ENCODE measurements at regions of chr12 and their contacts with region 1.

Region 1: GRCh38 chr12:107645630-107646333 is 39.8 kb upstream of the PWP1 start:
- DNase-seq: no peak
- H3K4me3 ChIP-seq: no peak overlapping the region
- H3K27ac ChIP-seq: no peak overlapping the region
- H3K4me1 ChIP-seq: no peaks in the 10 kb centered on the region
- H3K27me3 ChIP-seq: no peaks in the 10 kb centered on the region
- CTCF ChIP-seq: no peak

Region 2: GRCh38 chr12:107670999-107671643 is 25.3 kb after region 1 on chr12:
- CTCF ChIA-PET with region 1: interaction called, 10 read pairs
- POLR2A ChIA-PET with region 1: no interaction called
- intact Hi-C with region 1: no loop called
- DNase-seq: no peak
- H3K4me3 ChIP-seq: no peak overlapping the region
- H3K27ac ChIP-seq: no peak overlapping the region
- H3K4me1 ChIP-seq: no peaks in the 10 kb centered on the region; the same call in 1 of the 2 replicates
- H3K27me3 ChIP-seq: peaks cover 11% of the 10 kb centered on the region; the same call in 1 of the 2 replicates
- CTCF ChIP-seq: peak; percentile 69

Region 3: DNA sequence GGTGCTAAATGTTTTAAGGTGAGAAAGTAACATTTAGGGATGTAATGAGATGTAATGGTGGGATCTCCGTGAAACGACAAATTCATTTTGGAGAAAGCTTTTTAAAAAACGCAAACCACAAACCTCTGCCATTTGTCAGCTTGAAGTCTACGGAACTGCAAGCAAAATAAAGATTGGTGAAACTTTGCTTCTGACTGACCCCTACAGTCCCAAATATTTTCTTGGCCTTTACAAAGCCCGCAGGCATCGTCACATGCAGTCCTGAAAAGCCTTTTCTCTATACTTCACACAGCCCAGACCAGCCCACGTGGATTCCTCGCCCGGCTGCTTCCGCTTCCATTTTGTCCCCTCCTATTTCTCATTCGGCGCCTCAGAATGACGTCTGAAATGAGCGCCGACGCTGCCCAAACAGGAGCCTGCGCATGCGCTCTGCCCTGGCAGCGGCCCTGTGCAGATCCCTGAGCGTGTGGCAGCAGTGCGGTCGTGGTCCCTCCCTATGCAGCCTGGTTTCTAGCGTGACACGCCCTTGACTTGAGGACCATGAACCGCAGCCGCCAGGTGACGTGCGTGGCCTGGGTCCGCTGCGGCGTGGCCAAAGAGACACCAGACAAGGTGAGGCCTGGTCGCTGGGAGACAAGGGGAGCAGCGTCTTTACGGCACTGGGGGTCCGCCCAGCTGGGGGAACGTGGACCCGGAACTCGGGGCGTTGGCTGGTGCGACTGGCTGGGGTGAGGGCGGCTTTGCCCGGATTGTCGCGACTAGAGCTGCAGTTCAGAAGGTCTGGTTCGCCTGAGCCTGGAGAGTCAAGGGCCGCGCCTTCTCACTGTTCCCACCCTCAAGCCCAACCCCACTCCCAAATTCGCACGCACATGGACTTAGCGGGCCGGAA is 39.8 kb after region 1 on chr12 and contains the start of gene PWP1:
- CTCF ChIA-PET with region 1: no interaction called
- POLR2A ChIA-PET with region 1: interaction called, 11 read pairs
- intact Hi-C with region 1: no loop called
- DNase-seq: peak; percentile 88 to 91
- H3K4me3 ChIP-seq: peak within 1 kb of the TSS; percentile 64
- H3K27ac ChIP-seq: peak within 1 kb of the TSS; percentile 71
- H3K4me1 ChIP-seq: peaks cover 6% of the 10 kb centered on the region; the same call in 1 of the 2 replicates
- H3K27me3 ChIP-seq: no peaks in the 10 kb centered on the region
- CTCF ChIP-seq: no peak
- total RNA-seq, gene PWP1: 41.4 and 44.1 TPM in 2 replicates

Region 4: GRCh38 chr12:108017472-108018057 is 371.8 kb after region 1 on chr12:
- CTCF ChIA-PET with region 1: no interaction called
- POLR2A ChIA-PET with region 1: no interaction called
- intact Hi-C with region 1: no loop called
- DNase-seq: no peak
- H3K4me3 ChIP-seq: no peak overlapping the region
- H3K27ac ChIP-seq: no peak overlapping the region
- H3K4me1 ChIP-seq: no peaks in the 10 kb centered on the region
- H3K27me3 ChIP-seq: peaks cover 3% of the 10 kb centered on the region; the same call in 1 of the 2 replicates
- CTCF ChIP-seq: no peak